ENCODE measurements at regions of chr4 and their contacts with region 1.

Region 1: GRCh38 chr4:186067757-186068385 is 1.1 kb upstream of the TLR3 start:
- DNase-seq: peak; percentile 44
- H3K4me3 Mint-ChIP-seq: no peak overlapping the region
- H3K27ac Mint-ChIP-seq: no peak overlapping the region
- H3K4me1 Mint-ChIP-seq: peaks cover 18% of the 10 kb centered on the region
- H3K27me3 Mint-ChIP-seq: peaks cover 4% of the 10 kb centered on the region

Region 2: GRCh38 chr4:186137196-186137794 is 69.4 kb after region 1 on chr4:
- CTCF ChIA-PET with region 1: interaction called, 44 read pairs
- DNase-seq: no peak
- H3K4me3 Mint-ChIP-seq: no peak overlapping the region
- H3K27ac Mint-ChIP-seq: no peak overlapping the region
- H3K4me1 Mint-ChIP-seq: peaks cover 11% of the 10 kb centered on the region
- H3K27me3 Mint-ChIP-seq: peaks cover 10% of the 10 kb centered on the region

Measured in activated naive CD4-positive, alpha-beta T cell treated with anti-CD3 and anti-CD28 coated beads, Interleukin-2, amount 10 ng/mL, durations not matched to agents 7 days and 5 days (primary cell).